Motor neuron (in vitro differentiated cells): ENCODE measurements at regions of chr1 and their contacts with region 1.

Region 1: GRCh38 chr1:175154629-175155472 is 37.7 kb downstream of the KIAA0040 start:
- ATAC-seq: peak in 4 of 8 experiments; percentile 11 to 73 (median 46)
- H3K4me3 ChIP-seq: no peak overlapping the region
- H3K27ac ChIP-seq: no peak overlapping the region
- H3K4me1 ChIP-seq: peaks cover 20 to 25% of the 10 kb centered on the region in 2 donors

Region 2: GRCh38 chr1:174902531-174903099 is 252.2 kb before region 1 on chr1:
- in situ Hi-C with region 1: no loop called
- ATAC-seq: no peak
- H3K4me3 ChIP-seq: no peak overlapping the region
- H3K27ac ChIP-seq: no peak overlapping the region
- H3K4me1 ChIP-seq: no peaks in the 10 kb centered on the region

Region 3: DNA sequence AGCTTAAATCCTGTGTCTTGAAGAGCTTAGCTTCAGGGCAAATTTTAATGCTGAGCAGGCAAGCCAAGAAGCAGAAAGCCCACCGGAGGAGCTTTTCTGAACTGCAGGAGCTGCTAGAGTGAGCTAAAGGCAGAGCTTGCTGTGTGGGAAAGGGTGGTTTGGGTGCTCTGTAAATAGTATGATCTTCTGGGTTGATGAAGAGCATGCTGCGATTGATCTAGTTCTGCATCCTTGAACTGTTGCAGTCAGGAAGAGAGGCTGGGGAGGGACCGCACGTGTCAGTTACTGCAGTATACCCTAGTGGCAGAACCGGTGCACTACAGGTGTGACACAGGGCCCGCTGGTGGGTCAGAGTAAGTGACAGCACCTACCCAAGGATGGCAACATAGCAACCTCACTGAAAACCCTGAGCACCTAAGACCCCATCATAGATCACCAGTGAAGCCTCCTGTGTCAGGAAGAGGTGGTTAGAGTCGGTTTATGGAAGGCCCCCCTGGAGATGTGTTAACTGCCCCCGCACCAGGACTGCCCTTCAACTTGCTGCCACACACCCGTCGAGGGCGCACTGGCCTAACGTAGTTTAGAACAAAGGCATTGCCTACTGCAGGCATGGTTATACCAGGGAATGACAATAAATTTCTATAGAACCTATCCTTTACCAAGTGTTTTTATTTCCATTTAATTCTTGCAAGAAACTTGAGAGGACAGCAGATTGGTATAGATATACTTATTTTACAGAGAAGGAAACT is 183.7 kb after region 1 on chr1:
- in situ Hi-C with region 1: loop called in 1 of 9 experiments (anchors 25 kb)
- ATAC-seq: peak in 4 of 8 experiments; percentile 43 to 75 (median 68)
- H3K4me3 ChIP-seq: no peak overlapping the region
- H3K27ac ChIP-seq: no peak overlapping the region
- H3K4me1 ChIP-seq: no peaks in the 10 kb centered on the region

Region 4: GRCh38 chr1:175597969-175598765 is 443.3 kb after region 1 on chr1:
- in situ Hi-C with region 1: no loop called
- ATAC-seq: no peak
- H3K4me3 ChIP-seq: no peak overlapping the region
- H3K27ac ChIP-seq: no peak overlapping the region
- H3K4me1 ChIP-seq: peaks cover 4 to 9% of the 10 kb centered on the region in 2 donors

Region 5: GRCh38 chr1:176073524-176074157 is 918.8 kb after region 1 on chr1:
- in situ Hi-C with region 1: loop called in 2 of 9 experiments (anchors 25 kb)
- ATAC-seq: peak; percentile 66 to 89 (median 79)
- H3K4me3 ChIP-seq: no peak overlapping the region
- H3K27ac ChIP-seq: no peak overlapping the region
- H3K4me1 ChIP-seq: no peaks in the 10 kb centered on the region

Region 6: DNA sequence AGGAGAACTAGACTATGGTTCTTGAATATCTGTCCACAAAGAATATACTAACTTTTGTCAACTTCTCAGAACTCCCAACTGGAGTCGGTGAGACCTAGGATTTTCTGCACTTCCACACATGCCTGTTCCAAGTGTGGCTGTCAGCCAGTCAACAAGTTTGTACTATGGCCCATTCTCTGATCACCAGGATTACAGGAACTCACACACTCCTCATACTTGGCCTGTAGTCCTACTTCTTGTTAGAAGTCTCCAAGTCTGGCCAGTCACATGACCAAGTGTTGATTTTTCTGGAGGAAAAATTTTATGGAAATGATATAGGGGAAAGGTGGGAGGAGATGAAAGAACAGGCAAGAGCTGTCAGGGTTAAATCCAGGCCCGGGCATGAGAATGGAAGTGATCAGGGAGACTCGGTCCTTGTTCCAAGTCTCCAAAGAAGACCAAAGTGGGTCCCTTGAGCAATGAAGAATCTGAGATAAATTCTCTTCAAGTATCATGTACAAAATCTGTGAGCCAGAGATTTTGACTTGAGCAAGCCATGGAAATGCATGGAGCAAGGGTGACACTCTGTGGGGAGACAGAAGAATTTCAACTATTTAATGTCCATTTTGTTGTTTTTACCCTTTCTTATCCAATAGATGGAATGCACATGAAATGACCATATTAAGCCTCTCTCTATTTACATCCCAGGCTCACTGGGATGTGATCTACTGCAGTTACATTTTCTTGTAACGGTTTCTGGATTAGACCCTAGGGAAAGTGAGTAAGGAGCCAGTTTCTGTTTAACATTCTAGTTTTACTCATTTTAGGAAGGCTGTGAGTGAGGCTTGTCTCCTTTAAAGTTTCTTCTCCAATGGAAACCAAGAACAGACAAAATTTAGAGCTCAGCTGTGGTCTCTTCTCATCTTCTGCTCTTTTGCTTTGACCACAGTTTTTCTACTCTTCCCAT is 1688.8 kb after region 1 on chr1:
- in situ Hi-C with region 1: loop called in 1 of 9 experiments (anchors 25 kb)
- ATAC-seq: peak in 7 of 8 experiments; percentile 37 to 93 (median 58)
- H3K4me3 ChIP-seq: no peak overlapping the region
- H3K27ac ChIP-seq: no peak overlapping the region
- H3K4me1 ChIP-seq: peaks cover 0 to 14% of the 10 kb centered on the region in 2 donors